ENCODE measurements at regions of chr1 and their contacts with region 1.

Region 1: GRCh38 chr1:55584526-55585401 is 369.6 kb upstream of the USP24 start:
- DNase-seq: no peak

Region 2: GRCh38 chr1:55635856-55636255 is 51.1 kb after region 1 on chr1:
- intact Hi-C with region 1: loop called (anchors 5 to 10 kb)
- DNase-seq: no peak

Region 3: GRCh38 chr1:55640708-55641473 is 56.1 kb after region 1 on chr1:
- intact Hi-C with region 1: loop called (anchors 5 to 10 kb)
- DNase-seq: peak; percentile 89

Measured in posterior vena cava (tissue), 2 donors.